Dorsolateral prefrontal cortex (tissue), 120 donors: ENCODE measurements at regions of chr20 and their contacts with region 1.

Region 1: DNA sequence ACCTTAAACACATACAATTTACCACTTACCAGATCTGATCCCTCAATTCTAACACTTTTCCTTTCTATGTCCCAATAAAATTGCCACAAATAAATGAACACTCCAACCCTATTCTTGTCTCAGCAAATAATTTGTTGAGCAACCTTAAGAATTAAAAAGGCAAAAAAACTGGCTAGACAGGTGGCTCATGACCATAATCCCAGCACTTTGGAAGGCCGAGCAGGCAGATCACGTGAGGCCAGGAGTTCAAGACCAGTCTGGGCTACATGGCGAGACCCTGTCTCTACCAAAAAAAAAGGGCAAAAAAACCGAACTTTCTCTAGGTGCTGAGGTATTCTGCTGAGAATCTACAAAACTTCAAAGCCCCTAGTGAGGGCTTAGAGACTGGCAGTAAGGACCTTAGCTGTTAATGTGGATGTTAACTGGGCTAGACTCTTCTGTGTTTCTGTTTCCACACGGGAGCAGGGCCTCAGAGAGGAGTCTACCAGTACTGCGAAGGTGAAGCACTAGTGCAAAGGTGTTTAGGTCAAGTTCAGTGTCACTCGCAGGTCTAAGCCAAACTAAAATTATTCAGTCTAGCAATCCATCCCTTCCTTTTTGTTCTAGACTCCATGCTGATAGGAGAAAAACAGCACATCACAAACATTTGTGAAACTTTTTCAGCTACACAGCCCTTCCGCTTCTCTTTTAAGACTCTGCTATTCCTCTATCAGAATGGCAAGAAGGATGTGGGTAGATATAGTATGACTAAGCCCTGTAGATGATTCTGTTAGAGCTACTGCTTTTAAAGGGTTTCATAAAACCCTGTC is 2.6 kb downstream of the FASTKD5 start:
- DNase-seq: no peak
- H3K4me3 ChIP-seq: peak overlapping the region in 24 of 59 donors; percentile 7 to 99 (median 95)
- H3K27ac ChIP-seq: peak overlapping the region in 1 of 59 donors; percentile 6
- H3K27me3 ChIP-seq: no peaks in the 10 kb centered on the region
- CTCF ChIP-seq: no peak

Region 2: GRCh38 chr20:3068986-3069900 is 87.8 kb before region 1 on chr20:
- intact Hi-C with region 1: no loop called
- DNase-seq: no peak
- H3K4me3 ChIP-seq: no peak overlapping the region
- H3K27ac ChIP-seq: no peak overlapping the region
- H3K27me3 ChIP-seq: peaks cover 0 to 30% (median 20%) of the 10 kb centered on the region in 45 donors
- CTCF ChIP-seq: no peak

Region 3: DNA sequence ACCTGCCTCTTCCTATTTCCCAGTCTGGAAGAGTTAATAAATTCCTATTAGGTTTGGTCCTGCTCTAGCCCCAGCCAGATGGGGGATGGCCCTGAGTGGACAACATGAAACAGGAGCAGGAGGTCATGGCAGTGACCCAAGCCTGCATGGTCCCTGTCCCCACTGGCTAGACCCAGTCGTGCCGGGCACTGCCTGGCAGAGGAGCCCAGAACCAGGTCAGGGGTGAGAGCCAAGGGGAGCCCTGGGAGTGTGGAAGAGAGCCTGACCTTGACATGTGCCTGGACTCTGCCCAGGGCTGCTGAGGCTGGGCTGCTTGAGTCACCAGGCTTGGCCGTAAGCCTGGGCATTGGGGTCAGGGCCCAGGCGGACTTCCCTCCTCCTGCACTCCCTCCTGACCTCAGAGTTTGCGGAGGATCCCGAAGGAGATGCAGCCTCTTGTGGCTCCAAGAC is 76.1 kb before region 1 on chr20:
- intact Hi-C with region 1: no loop called
- DNase-seq: peak in 1 of 10 donors; percentile 48
- H3K4me3 ChIP-seq: no peak overlapping the region
- H3K27ac ChIP-seq: no peak overlapping the region
- H3K27me3 ChIP-seq: peaks cover 0 to 27% (median 10%) of the 10 kb centered on the region in 45 donors
- CTCF ChIP-seq: no peak

Region 4: GRCh38 chr20:3115190-3116107 is 41.6 kb before region 1 on chr20:
- intact Hi-C with region 1: loop called (anchors 5 kb)
- DNase-seq: peak in 2 of 10 donors; percentile 41 to 65
- H3K4me3 ChIP-seq: peak overlapping the region in 11 of 59 donors; percentile 2 to 34 (median 18)
- H3K27ac ChIP-seq: peak overlapping the region in 13 of 59 donors; percentile 6 to 60 (median 28)
- H3K27me3 ChIP-seq: no peaks in the 10 kb centered on the region
- CTCF ChIP-seq: peak; percentile 67 to 96 (median 79)

Region 5: GRCh38 chr20:3121271-3121911 is 35.6 kb before region 1 on chr20:
- intact Hi-C with region 1: loop called (anchors 5 kb)
- DNase-seq: peak in 1 of 10 donors; percentile 11
- H3K4me3 ChIP-seq: no peak overlapping the region
- H3K27ac ChIP-seq: peak overlapping the region in 1 of 59 donors; percentile 5
- H3K27me3 ChIP-seq: no peaks in the 10 kb centered on the region
- CTCF ChIP-seq: no peak